ENCODE measurements at regions of chr7 and their contacts with region 1.

Region 1: DNA sequence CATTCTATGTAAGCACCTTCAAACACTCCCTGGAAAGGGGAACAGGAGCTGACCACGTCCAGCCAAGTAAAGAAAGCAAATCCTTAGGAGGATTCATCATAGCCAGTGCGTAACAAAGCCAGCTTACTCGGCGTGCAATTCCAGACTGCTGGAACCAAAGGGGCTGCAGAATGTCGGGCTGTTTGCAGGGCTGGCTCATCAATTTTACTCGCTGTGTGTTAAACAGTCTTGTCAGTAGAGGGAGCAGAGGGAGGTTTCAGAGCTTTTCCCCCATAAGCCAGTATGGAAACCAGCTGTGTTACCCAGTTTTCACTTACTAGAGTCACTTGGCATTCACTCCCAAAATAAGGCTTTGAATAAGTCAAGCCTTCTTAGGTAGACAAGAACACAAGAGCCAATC is 127.1 kb downstream of the KMT2E start:
- DNase-seq: peak; percentile 21
- ATAC-seq: peak; percentile 82
- H3K4me3 ChIP-seq: no peak overlapping the region
- H3K27ac ChIP-seq: no peak overlapping the region
- H3K4me1 ChIP-seq: peaks cover 5% of the 10 kb centered on the region
- H3K27me3 ChIP-seq: no peaks in the 10 kb centered on the region
- CTCF ChIP-seq: no peak
- EP300 ChIP-seq: no peak
- POLR2A ChIP-seq: no peak
- RAD21 ChIP-seq: no peak

Region 2: GRCh38 chr7:104873346-104873849 is 267.7 kb before region 1 on chr7:
- CTCF ChIA-PET with region 1: no interaction called
- POLR2A ChIA-PET with region 1: no interaction called
- in situ Hi-C with region 1: no loop called
- intact Hi-C with region 1: no loop called
- DNase-seq: no peak
- ATAC-seq: no peak
- H3K4me3 ChIP-seq: no peak overlapping the region
- H3K27ac ChIP-seq: no peak overlapping the region
- H3K4me1 ChIP-seq: no peaks in the 10 kb centered on the region
- H3K27me3 ChIP-seq: peaks cover 0 to 4% of the 10 kb centered on the region in 2 experiments; a peak in 1 of 5 replicates
- CTCF ChIP-seq: no peak
- EP300 ChIP-seq: no peak
- POLR2A ChIP-seq: no peak
- RAD21 ChIP-seq: no peak

Region 3: DNA sequence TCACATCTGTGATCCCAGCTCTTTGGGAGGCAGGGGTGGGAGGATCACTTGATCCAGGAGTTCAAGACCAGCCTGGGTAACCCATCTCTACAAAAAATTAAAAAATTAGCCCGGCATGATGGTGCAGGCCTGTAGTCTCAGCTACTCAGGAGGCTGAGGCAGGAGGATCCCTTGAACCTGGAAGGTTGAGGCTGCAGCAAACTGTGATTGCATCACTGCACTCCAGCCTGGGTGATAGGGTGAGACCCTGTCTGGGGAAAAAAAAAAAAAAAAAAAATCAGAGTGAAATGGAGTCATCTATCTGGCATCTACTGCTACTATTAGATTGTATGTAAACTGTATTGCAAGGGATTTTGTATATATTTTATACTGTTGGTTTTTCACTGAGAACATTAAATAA is 67.9 kb before region 1 on chr7:
- CTCF ChIA-PET with region 1: no interaction called
- POLR2A ChIA-PET with region 1: no interaction called
- in situ Hi-C with region 1: no loop called
- intact Hi-C with region 1: no loop called
- DNase-seq: no peak
- ATAC-seq: no peak
- H3K4me3 ChIP-seq: no peak overlapping the region
- H3K27ac ChIP-seq: no peak overlapping the region
- H3K4me1 ChIP-seq: no peaks in the 10 kb centered on the region
- H3K27me3 ChIP-seq: no peaks in the 10 kb centered on the region
- CTCF ChIP-seq: no peak
- EP300 ChIP-seq: no peak
- POLR2A ChIP-seq: no peak
- RAD21 ChIP-seq: no peak

Region 4: DNA sequence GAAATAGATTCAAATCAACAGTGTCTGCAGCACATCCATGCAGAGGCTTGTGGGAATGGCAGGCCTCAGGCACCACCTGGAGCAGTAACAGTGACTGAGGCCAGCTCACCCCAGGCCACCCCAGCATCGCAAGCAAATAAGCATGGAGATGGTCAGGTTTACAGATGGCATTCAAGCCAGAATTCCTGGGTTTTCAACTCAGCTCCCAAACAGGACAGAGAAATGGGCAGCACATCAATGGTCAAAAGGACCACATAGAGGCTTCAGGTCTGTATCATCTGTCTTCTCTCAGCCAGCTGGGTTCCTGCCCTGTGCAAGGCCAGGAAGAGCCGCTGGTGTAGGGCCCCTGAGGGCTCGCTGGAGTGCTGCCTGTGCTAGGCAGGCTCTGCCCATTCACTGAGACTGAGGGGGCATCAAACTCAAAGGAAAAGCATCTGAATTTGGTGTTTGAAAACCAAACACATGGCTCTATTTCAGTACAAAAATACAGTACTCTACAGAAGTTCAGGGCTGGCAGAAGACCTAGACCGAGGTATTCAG is 14.6 kb before region 1 on chr7:
- CTCF ChIA-PET with region 1: no interaction called
- POLR2A ChIA-PET with region 1: no interaction called
- in situ Hi-C with region 1: no loop called
- intact Hi-C with region 1: no loop called
- DNase-seq: no peak
- ATAC-seq: no peak
- H3K4me3 ChIP-seq: no peak overlapping the region
- H3K27ac ChIP-seq: no peak overlapping the region
- H3K4me1 ChIP-seq: no peaks in the 10 kb centered on the region
- H3K27me3 ChIP-seq: no peaks in the 10 kb centered on the region
- CTCF ChIP-seq: no peak
- EP300 ChIP-seq: no peak
- POLR2A ChIP-seq: no peak
- RAD21 ChIP-seq: no peak

Region 5: GRCh38 chr7:105198223-105198622 is 57.2 kb after region 1 on chr7:
- CTCF ChIA-PET with region 1: no interaction called
- POLR2A ChIA-PET with region 1: no interaction called
- in situ Hi-C with region 1: no loop called
- intact Hi-C with region 1: loop called (anchors 10 kb)
- DNase-seq: peak; percentile 39
- ATAC-seq: peak; percentile 82
- H3K4me3 ChIP-seq: no peak overlapping the region
- H3K27ac ChIP-seq: no peak overlapping the region
- H3K4me1 ChIP-seq: peaks cover 39% of the 10 kb centered on the region
- H3K27me3 ChIP-seq: no peaks in the 10 kb centered on the region
- CTCF ChIP-seq: no peak
- EP300 ChIP-seq: no peak
- POLR2A ChIP-seq: no peak
- RAD21 ChIP-seq: no peak

Region 6: DNA sequence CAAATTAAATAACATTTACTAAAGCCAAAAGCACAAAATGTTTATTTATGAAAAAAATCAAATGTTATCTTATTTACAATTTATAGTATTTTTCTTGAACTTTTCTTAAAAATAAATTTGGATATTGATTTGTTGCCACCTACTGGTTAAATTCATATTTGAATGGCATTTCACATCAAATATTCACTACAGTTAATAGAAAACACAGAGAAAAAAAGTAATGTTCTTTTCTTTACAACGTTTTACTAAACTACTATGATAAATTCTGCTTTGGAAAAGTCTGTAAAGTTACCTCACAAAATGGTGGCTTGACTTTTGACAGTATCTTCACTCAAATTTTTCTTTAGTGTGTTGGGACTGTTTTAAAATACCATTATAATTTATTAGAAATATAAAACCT is 194.9 kb after region 1 on chr7:
- CTCF ChIA-PET with region 1: no interaction called
- POLR2A ChIA-PET with region 1: no interaction called
- in situ Hi-C with region 1: no loop called
- intact Hi-C with region 1: loop called (anchors 5 kb)
- DNase-seq: no peak
- ATAC-seq: no peak
- H3K4me3 ChIP-seq: no peak overlapping the region
- H3K27ac ChIP-seq: no peak overlapping the region
- H3K4me1 ChIP-seq: peaks cover 8% of the 10 kb centered on the region; the same call in 1 of the 2 replicates
- H3K27me3 ChIP-seq: no peaks in the 10 kb centered on the region
- CTCF ChIP-seq: no peak
- EP300 ChIP-seq: no peak
- POLR2A ChIP-seq: no peak
- RAD21 ChIP-seq: no peak

Measured in HepG2 (cell line).